ENCODE measurements at regions of chr17 and their contacts with region 1.

Region 1: GRCh38 chr17:21043286-21044232 is 748 bp upstream of the USP22 start:
- DNase-seq: peak; percentile 93
- H3K4me3 Mint-ChIP-seq: peak overlapping the region; percentile 86
- H3K27ac Mint-ChIP-seq: peak overlapping the region; percentile 50
- H3K4me1 Mint-ChIP-seq: peaks cover 10% of the 10 kb centered on the region
- H3K27me3 Mint-ChIP-seq: no peaks in the 10 kb centered on the region
- CTCF ChIP-seq: peak; percentile 60

Region 2: GRCh38 chr17:21098934-21099689 is 55.6 kb after region 1 on chr17:
- CTCF ChIA-PET with region 1: interaction called, 14 read pairs
- intact Hi-C with region 1: loop called (anchors 5 kb)
- DNase-seq: peak; percentile 73
- H3K4me3 Mint-ChIP-seq: peak overlapping the region; percentile 77
- H3K27ac Mint-ChIP-seq: peak overlapping the region; percentile 76
- H3K4me1 Mint-ChIP-seq: peaks cover 9% of the 10 kb centered on the region
- H3K27me3 Mint-ChIP-seq: no peaks in the 10 kb centered on the region
- CTCF ChIP-seq: no peak

Region 3: DNA sequence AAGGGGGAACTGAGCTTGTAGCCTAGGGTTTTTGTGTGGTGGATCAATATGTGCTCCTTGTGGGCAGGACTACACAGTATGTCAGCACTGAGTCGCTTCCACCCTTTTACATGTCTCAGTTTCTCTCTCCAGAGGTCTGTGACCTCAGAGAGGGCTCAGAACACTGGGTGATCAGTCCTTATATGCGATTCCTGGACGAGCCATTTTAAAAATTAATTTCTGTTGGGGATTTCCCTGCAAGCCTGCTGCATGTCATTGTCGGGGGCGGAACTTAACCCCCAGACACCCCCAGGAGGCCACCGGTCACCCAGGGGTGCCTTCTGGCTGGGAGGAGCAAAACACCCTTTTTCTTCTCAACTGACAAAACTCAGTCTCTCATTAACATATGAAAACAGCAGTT is 97.4 kb after region 1 on chr17:
- CTCF ChIA-PET with region 1: no interaction called
- intact Hi-C with region 1: no loop called
- DNase-seq: no peak
- H3K4me3 Mint-ChIP-seq: no peak overlapping the region
- H3K27ac Mint-ChIP-seq: no peak overlapping the region
- H3K4me1 Mint-ChIP-seq: no peaks in the 10 kb centered on the region
- H3K27me3 Mint-ChIP-seq: no peaks in the 10 kb centered on the region
- CTCF ChIP-seq: no peak

Region 4: DNA sequence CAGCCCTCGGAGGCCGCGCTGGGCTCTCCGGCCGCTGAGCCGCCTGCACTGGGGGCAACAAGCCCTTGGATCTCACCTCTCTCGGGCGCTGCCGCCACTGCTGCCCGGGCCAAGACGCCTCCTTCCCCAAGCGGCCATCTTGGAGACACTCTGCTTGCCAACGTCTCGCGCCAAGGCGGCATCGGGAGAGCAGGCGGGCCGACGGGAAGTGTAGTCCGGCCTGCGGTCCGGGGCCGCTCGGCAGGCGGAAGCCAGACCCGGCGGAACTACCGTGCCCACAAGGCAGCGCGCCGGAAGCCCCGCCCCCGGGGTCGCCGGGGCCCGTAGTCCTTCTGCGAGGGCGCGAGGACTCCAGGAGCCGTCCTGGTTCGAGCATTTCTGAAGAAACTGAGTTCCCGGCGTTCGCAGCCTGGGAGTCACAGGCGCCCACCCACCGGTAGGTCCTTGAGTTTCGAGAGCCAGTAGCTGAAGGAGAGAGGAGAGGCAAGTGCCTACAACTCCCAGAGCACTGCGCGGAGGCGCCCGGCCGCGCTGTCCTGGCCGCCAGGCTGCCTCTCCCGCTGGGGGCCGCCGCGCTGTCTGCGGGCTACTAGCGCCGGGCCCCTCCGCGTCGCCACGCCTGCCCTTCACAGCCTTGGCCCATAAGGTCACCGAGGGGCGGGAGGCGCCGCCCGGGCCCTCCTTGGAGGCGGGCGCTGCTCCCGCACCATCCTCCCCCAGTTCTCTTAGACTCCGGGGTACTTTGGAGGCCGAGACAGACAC is 170.6 kb after region 1 on chr17 and contains the start of gene TMEM11:
- CTCF ChIA-PET with region 1: no interaction called
- intact Hi-C with region 1: loop called (anchors 10 kb)
- DNase-seq: peak; percentile 92
- H3K4me3 Mint-ChIP-seq: peak within 1 kb of the TSS; percentile 83
- H3K27ac Mint-ChIP-seq: peak within 1 kb of the TSS; percentile 77
- H3K4me1 Mint-ChIP-seq: peaks cover 20% of the 10 kb centered on the region
- H3K27me3 Mint-ChIP-seq: no peaks in the 10 kb centered on the region
- CTCF ChIP-seq: no peak
- total RNA-seq, gene TMEM11: 18.9 and 20.3 TPM in 2 replicates